ENCODE measurements at regions of chr12 and their contacts with region 1.

Region 1: DNA sequence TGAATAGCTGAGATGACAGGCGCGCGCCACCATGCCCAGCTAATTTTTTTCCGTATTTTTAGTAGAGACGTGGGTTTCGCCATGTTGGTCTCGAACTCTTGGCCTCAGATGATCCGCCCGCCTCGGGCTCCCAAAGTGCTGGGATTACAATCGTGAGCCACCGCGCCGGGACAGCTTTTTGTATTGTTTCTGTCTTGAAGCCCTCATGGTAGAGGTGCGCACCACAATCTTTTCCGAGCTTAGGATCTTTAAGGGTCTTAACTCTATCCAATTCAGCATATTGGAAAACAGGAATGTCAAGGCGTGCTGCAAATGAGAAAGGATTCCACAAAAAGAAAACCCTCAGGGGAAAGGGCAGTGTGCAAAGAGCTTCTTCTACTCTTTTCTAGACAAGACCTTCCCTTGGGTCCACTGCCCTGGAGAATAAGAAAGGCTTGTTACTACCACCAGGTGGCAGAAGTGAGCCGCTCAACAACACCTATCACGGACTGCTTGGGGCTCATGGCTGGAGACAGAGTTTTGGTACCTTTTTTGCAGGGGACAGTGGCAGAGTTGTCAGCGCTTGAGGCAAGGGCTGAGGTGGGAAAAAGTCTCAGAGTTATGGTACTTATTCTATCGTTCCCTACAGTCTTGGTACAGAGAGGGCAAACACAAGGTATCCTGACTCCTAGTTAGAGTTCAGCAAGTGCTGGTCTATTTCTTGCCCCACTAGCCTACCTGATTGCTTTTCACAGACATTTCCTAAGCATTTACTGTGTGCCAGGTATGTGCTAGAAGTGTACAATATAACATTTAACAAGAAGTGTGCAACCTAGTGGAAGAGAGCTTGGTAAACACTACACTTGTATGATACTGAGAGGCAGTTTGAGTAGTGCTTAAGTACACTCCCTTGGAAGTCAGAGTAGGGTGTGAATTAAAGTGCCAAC is 16.4 kb upstream of the SP7 start:
- DNase-seq: peak; percentile 90
- H3K4me3 Mint-ChIP-seq: no peak overlapping the region
- H3K27ac Mint-ChIP-seq: peak overlapping the region; percentile 43
- H3K4me1 Mint-ChIP-seq: peaks cover 12% of the 10 kb centered on the region
- H3K27me3 Mint-ChIP-seq: no peaks in the 10 kb centered on the region

Region 2: DNA sequence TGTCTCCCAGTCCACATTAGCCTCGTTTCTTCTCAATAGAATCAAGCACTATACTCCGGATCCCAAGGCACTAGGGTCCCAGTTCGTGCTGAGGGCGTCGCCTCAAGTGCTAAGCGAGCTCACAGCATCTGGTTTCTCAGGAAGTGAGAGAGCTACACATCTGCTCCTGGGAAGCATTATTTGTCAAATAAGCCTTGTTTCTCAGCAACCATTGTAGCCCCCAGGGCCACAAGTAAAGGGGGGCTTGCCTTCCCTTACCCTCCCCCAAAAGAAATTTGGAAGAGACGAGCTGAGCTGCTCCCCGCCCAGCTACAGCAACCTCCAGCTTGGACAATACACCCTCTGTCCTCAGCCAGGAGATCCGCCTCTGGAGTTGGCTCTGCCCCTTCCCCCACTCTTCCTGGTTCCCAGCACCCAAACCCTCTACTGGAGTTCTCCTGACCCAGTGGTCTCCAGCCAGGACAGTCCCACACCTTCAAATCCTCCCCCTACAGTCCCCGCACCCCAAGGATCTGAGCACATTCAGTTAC is 308.5 kb before region 1 on chr12:
- CTCF ChIA-PET with region 1: no interaction called
- POLR2A ChIA-PET with region 1: no interaction called
- DNase-seq: no peak
- H3K4me3 Mint-ChIP-seq: no peak overlapping the region
- H3K27ac Mint-ChIP-seq: no peak overlapping the region
- H3K4me1 Mint-ChIP-seq: peaks cover 32% of the 10 kb centered on the region
- H3K27me3 Mint-ChIP-seq: peaks cover 10% of the 10 kb centered on the region

Region 3: GRCh38 chr12:53365245-53365904 is 12.8 kb after region 1 on chr12:
- CTCF ChIA-PET with region 1: interaction called, 12 read pairs
- POLR2A ChIA-PET with region 1: no interaction called
- DNase-seq: no peak
- H3K4me3 Mint-ChIP-seq: no peak overlapping the region
- H3K27ac Mint-ChIP-seq: peak overlapping the region; percentile 77
- H3K4me1 Mint-ChIP-seq: peaks cover 13% of the 10 kb centered on the region
- H3K27me3 Mint-ChIP-seq: no peaks in the 10 kb centered on the region

Region 4: GRCh38 chr12:53379389-53380103 is 27.0 kb after region 1 on chr12:
- CTCF ChIA-PET with region 1: interaction called, 34 read pairs
- POLR2A ChIA-PET with region 1: no interaction called
- DNase-seq: peak; percentile 99
- H3K4me3 Mint-ChIP-seq: no peak overlapping the region
- H3K27ac Mint-ChIP-seq: no peak overlapping the region
- H3K4me1 Mint-ChIP-seq: peaks cover 40% of the 10 kb centered on the region
- H3K27me3 Mint-ChIP-seq: no peaks in the 10 kb centered on the region

Region 5: DNA sequence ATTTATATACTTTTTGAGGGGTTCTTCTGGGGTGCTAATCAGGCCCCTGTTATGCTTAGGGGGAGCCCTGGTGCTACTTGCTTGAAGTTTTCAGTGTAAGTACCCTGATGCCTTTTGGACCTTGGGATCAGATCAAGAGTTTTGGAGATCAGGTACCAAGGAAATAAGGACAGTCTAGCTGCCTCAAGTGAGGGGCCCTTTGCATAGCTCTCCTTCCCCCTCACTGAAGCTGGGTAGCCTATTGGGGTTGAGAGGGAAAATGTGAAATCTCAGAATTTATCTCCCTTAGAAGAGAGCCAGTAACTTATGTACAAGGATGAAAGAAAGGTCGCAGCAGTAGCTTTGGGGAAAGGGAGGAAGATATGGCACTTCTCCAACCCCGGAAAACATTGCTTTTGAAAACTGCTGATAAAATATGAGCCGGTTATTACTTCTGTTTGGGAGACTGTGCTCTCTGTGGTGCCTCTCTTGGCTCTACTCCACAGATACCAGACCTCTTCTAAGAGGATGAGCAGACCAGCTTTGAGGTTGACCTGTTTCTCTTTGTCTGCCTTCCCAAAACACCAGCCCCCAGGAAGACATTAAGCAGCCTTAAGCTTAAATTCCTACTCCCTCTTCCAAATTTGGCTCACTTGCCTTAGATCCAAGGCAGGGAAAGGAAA is 62.3 kb after region 1 on chr12:
- CTCF ChIA-PET with region 1: interaction called, 28 read pairs
- POLR2A ChIA-PET with region 1: no interaction called
- DNase-seq: no peak
- H3K4me3 Mint-ChIP-seq: no peak overlapping the region
- H3K27ac Mint-ChIP-seq: no peak overlapping the region
- H3K4me1 Mint-ChIP-seq: peaks cover 48% of the 10 kb centered on the region
- H3K27me3 Mint-ChIP-seq: no peaks in the 10 kb centered on the region

Region 6: GRCh38 chr12:53424626-53425514 is 72.3 kb after region 1 on chr12:
- CTCF ChIA-PET with region 1: interaction called, 28 read pairs
- POLR2A ChIA-PET with region 1: no interaction called
- DNase-seq: no peak
- H3K4me3 Mint-ChIP-seq: no peak overlapping the region
- H3K27ac Mint-ChIP-seq: no peak overlapping the region
- H3K4me1 Mint-ChIP-seq: peaks cover 15% of the 10 kb centered on the region
- H3K27me3 Mint-ChIP-seq: no peaks in the 10 kb centered on the region

Region 7: GRCh38 chr12:53508534-53509199 is 156.1 kb after region 1 on chr12:
- CTCF ChIA-PET with region 1: interaction called, 14 read pairs
- POLR2A ChIA-PET with region 1: no interaction called
- DNase-seq: peak; percentile 87
- H3K4me3 Mint-ChIP-seq: no peak overlapping the region
- H3K27ac Mint-ChIP-seq: peak overlapping the region; percentile 57
- H3K4me1 Mint-ChIP-seq: peaks cover 14% of the 10 kb centered on the region
- H3K27me3 Mint-ChIP-seq: no peaks in the 10 kb centered on the region